ENCODE measurements at regions of chr20 and their contacts with region 1.

Region 1: GRCh38 chr20:32521780-32522525 is 63.2 kb downstream of the NOL4L start:
- DNase-seq: peak; percentile 49
- H3K4me3 ChIP-seq: no peak overlapping the region
- H3K27ac ChIP-seq: no peak overlapping the region
- H3K4me1 ChIP-seq: peaks cover 53% of the 10 kb centered on the region
- H3K27me3 ChIP-seq: no peaks in the 10 kb centered on the region
- CTCF ChIP-seq: peak; percentile 90

Region 2: DNA sequence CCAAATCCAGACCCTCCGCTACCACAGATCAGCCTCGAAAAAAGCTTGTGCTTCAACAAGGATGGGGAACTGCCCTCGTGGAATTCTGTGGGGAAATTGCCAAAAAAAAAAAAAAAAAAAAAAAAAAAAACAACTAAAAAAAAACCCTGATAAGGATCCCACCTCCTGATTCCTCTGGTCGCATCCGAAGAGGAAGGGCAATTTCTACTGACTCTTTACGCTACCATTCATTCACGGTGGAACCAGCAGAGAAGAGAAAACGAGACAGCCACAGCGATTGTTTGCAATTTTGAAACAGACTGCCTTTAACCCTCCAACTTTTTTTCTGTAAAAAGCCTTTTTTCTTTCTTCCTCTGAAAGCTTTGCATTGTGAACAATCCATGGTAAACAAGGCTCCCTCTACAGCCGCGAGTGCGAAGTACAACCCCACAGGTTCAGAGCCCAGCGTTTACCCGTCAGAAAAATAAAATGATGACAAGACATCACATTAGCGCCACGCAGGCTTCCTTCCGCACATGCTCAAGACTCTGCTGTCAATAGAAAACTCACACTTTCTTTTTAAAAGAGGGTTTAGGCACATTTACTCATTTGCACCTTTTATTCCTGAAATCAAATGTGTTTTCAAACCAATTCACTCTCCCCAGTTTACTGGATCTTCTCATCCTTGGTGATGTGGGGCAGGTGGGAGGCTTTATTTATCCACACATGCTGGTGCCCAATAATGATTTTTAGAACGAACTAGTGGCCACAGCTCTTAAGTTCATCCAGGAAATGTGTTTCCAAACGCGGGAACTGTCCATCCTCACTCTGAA is 36.8 kb before region 1 on chr20:
- intact Hi-C with region 1: no loop called
- DNase-seq: peak; percentile 77
- H3K4me3 ChIP-seq: peak overlapping the region; percentile 85
- H3K27ac ChIP-seq: peak overlapping the region; percentile 88
- H3K4me1 ChIP-seq: peaks cover 49% of the 10 kb centered on the region
- H3K27me3 ChIP-seq: no peaks in the 10 kb centered on the region
- CTCF ChIP-seq: peak; percentile 88

Region 3: GRCh38 chr20:32585011-32585518 is 63.1 kb after region 1 on chr20 and contains the start of gene NOL4L:
- intact Hi-C with region 1: no loop called
- DNase-seq: peak; percentile 27
- H3K4me3 ChIP-seq: peak within 1 kb of the TSS; percentile 75
- H3K27ac ChIP-seq: peak within 1 kb of the TSS; percentile 38
- H3K4me1 ChIP-seq: peaks cover 25% of the 10 kb centered on the region
- H3K27me3 ChIP-seq: peaks cover 46% of the 10 kb centered on the region
- CTCF ChIP-seq: no peak
- total RNA-seq, gene NOL4L: 5.6 TPM

Region 4: DNA sequence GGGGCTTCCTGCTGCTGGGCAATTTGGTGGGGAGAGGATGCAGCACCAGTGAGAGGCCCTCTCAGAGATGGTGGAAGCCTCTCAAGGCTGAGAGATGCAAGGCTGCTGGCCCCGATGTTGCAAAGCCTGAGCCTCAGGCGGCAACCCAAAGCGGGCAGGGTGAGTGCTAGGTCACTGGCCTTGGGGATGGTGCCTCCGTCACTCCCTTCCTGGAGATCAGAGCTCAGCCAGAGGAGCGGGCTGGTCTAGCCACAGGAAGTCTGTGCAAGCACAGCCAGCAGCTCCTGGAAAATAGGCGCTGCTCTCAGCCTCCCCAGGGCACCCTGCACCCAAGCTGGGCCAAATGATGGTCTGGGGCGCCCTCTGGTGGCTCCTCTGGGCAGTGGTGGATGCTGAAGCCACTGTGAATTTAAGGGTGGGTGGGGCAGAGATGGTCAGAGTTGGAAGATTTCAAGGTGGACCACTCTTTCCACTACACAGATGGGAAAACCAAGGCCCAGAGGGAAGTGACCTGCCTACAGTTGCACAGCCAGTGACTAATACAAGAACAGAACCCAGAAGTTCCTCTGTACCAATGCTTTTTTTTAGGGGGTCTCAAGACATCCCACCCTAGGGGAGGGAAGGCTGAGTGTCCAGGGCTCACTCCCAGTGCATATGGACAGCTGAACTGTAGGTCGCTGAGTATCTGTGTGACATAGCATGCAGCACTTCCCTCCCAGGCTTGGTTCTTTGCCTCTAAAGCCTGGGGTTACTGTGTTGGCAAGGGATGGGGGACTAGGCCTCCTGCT is 131.0 kb after region 1 on chr20:
- intact Hi-C with region 1: loop called (anchors 2 kb)
- DNase-seq: peak; percentile 84
- H3K4me3 ChIP-seq: no peak overlapping the region
- H3K27ac ChIP-seq: no peak overlapping the region
- H3K4me1 ChIP-seq: peaks cover 6% of the 10 kb centered on the region
- H3K27me3 ChIP-seq: no peaks in the 10 kb centered on the region
- CTCF ChIP-seq: peak; percentile 95

Measured in left ventricle myocardium inferior (tissue), 1 donor.